IMR-90 (cell line): ENCODE measurements at regions of chr11 and their contacts with region 1.

Region 1: GRCh38 chr11:65251476-65251875 is 10.3 kb upstream of the POLA2 start:
- DNase-seq: peak; percentile 11
- ATAC-seq: no peak
- H3K4me3 ChIP-seq: no peak overlapping the region
- H3K27ac ChIP-seq: no peak overlapping the region
- H3K4me1 ChIP-seq: no peaks in the 10 kb centered on the region
- H3K27me3 ChIP-seq: peaks cover under 1% of the 10 kb centered on the region; the same call in 1 of the 2 replicates
- CTCF ChIP-seq: no peak
- POLR2A ChIP-seq: no peak
- RAD21 ChIP-seq: no peak

Region 2: DNA sequence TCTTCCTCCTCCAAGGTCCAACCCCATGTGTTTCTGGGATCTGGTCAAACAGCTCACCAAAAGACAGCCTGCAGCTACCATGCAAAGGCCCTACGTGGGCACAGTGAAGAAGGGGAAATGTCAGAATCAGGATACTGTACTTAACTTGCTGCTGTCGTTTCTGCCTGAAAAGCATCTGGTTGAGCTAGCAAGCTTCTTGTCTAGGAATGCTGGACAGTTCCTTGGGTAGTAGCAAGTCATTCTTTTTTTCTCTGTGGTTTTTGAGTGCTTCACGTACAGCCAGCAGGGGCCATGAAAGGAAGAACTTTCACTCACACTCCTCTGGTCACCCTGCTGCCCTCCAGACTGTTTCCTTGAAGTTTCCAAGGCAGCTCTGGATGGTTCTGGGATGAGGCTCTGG is 1359.2 kb before region 1 on chr11:
- CTCF ChIA-PET with region 1: no interaction called
- POLR2A ChIA-PET with region 1: no interaction called
- dilution Hi-C with region 1: no loop called
- in situ Hi-C with region 1: no loop called
- intact Hi-C with region 1: no loop called
- DNase-seq: peak; percentile 57
- ATAC-seq: peak; percentile 57
- H3K4me3 ChIP-seq: no peak overlapping the region
- H3K27ac ChIP-seq: no peak overlapping the region
- H3K4me1 ChIP-seq: peaks cover 8% of the 10 kb centered on the region
- H3K27me3 ChIP-seq: no peaks in the 10 kb centered on the region
- CTCF ChIP-seq: no peak
- POLR2A ChIP-seq: no peak
- RAD21 ChIP-seq: no peak

Region 3: DNA sequence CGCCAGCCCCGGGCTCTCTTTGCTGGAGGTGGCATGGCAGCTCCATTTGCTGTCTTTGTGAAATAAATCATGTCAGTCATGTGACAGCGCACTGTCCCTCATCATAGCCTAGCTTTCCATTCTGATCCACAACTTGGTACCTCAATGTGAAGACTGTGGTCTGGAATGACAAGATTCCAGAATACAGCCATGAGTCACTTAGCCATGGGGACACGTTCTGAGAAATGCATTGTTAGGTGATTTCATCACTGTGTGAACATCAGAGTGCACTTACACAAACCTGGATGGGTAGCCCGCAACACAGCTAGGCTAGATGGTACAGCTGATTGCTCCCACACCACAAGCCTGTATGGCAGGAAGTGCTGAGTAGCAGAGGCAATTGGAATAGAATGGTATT is 865.2 kb before region 1 on chr11:
- CTCF ChIA-PET with region 1: no interaction called
- POLR2A ChIA-PET with region 1: no interaction called
- dilution Hi-C with region 1: no loop called
- in situ Hi-C with region 1: no loop called
- intact Hi-C with region 1: no loop called
- DNase-seq: peak; percentile 35
- ATAC-seq: peak; percentile 24; the same call in 1 of the 2 replicates
- H3K4me3 ChIP-seq: no peak overlapping the region
- H3K27ac ChIP-seq: no peak overlapping the region
- H3K4me1 ChIP-seq: no peaks in the 10 kb centered on the region
- H3K27me3 ChIP-seq: peaks cover 51% of the 10 kb centered on the region
- CTCF ChIP-seq: no peak
- POLR2A ChIP-seq: no peak
- RAD21 ChIP-seq: no peak

Region 4: DNA sequence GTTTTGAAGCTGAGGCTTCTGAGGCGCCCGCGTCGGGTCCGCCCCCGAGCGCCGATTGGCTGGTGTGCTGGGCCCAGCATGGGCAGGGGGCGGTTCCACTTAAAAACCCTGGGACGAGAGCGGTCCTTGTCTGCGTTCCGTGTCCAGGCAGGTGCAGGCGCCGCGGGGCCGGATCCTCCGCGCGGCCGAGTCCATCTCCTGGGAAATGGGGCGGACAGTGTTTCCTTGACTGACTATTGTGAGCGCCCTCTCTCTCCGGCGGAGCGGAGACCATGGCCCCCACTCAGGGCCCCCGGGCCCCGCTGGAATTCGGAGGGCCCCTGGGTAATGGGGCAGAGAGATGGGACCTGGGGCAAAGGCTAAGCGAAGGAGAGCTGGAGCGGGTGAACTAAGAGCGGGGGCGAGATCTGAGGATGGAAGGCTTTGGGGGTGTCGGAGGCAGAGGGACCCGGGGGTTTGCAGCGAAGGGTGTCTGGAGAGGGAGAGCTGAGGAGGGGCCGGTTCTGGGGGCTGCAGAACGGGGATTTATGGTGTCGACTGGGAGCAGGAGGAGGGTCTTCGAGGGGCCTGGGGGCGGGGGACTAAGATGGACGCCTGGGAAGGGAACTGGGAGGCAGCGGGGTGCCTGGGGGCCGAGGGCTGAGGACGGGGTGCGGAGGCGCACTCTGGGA is 139.6 kb before region 1 on chr11 and contains the start of gene TM7SF2:
- CTCF ChIA-PET with region 1: no interaction called
- POLR2A ChIA-PET with region 1: no interaction called
- dilution Hi-C with region 1: no loop called
- in situ Hi-C with region 1: no loop called
- intact Hi-C with region 1: loop called (anchors 5 kb)
- DNase-seq: peak; percentile 86
- ATAC-seq: peak; percentile 84
- H3K4me3 ChIP-seq: peak within 1 kb of the TSS; percentile 43
- H3K27ac ChIP-seq: no peak within 1 kb of the TSS
- H3K4me1 ChIP-seq: peaks cover 20% of the 10 kb centered on the region
- H3K27me3 ChIP-seq: no peaks in the 10 kb centered on the region
- CTCF ChIP-seq: no peak
- POLR2A ChIP-seq: peak; percentile 59; the same call in 1 of the 2 replicates
- RAD21 ChIP-seq: no peak
- total RNA-seq, gene TM7SF2: 4.7 and 5.7 TPM in 2 replicates

Region 5: DNA sequence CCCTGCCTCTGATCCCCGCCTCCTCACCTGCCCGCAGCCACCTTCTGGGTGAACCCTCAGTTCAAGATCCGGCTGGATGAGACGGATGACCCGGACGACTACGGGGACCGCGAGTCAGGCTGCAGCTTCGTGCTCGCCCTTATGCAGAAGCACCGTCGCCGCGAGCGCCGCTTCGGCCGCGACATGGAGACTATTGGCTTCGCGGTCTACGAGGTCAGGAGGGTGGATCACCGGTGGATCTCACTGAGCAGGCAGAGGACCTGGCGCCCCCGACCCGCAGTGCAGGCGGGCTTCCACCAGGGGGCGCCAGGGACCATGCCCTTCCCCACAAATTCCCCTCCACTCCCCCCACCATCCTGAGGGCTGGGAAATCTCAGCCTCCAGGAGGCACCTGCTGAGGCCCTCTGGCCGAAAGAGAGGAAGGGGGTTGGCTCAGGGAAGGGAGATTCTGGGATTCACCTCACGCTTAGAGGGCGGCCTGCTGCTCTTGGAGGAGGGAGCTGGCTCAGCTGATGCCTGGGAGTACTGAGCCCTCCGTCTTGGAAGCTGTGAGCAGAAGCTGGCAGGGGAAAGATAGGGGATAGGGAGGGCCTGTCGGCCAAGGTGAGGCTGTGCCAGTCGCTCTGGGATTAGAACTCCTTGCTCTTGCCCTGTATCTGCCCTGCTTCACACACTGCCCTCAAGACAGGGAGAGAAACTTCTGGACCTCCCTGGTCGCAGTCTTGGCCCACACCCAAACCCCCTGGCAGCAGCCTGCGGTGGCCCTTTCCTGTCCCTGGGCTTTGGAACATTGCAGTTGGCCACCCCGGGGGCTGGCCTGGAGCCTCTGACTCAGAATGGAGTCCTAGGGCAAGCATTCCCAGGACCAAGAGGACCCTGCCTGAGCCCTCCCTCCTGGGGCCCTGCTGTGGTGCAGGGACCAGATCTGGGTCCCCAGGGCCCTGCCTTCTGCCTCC is 46.6 kb before region 1 on chr11:
- CTCF ChIA-PET with region 1: no interaction called
- POLR2A ChIA-PET with region 1: no interaction called
- dilution Hi-C with region 1: no loop called
- in situ Hi-C with region 1: no loop called
- intact Hi-C with region 1: loop called (anchors 1 kb)
- DNase-seq: peak; percentile 13
- ATAC-seq: peak; percentile 90
- H3K4me3 ChIP-seq: no peak overlapping the region
- H3K27ac ChIP-seq: no peak overlapping the region
- H3K4me1 ChIP-seq: no peaks in the 10 kb centered on the region
- H3K27me3 ChIP-seq: no peaks in the 10 kb centered on the region
- CTCF ChIP-seq: peak; percentile 73
- POLR2A ChIP-seq: no peak
- RAD21 ChIP-seq: peak; percentile 76

Region 6: DNA sequence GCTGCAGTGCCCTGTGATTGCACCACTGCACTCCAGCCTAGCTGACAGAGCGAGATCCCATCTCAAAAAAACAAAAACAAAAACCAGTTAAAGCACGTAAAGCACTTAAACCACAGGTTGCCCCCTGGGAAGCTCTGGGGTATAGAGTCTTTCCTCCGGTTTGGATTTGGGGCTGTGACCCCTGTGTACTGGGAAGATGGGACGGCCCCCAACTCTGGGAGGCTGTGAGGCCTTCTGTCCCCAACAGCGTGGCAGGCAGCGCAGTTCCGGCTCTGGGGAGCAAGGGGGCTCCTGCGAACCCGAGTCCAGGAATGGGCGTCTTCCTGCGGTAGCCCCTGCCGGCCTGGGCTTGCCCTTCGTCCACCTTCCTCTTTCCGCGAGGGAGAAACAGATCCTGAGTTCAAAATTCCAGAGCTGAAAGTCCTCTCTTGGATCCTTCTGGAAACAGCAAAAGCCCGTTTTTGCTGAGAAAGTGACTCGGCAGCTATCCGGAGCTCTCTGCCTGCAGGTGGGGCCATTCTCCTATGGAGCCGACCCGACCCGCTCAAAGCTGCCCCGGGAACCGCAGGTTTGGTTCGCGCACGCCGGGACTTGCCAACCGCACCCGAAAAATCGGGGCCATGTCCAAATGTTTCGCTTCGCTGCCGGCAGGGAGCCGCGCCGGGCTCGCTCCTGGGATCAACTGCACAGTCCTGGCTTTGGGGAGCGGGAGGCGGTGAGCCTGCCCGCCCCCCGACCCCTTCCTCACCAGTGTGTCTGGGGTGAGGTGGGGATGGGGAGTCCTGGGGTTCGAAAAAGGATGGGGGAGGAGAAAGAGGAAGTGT is 26.0 kb before region 1 on chr11:
- CTCF ChIA-PET with region 1: interaction called, 5 read pairs
- POLR2A ChIA-PET with region 1: no interaction called
- dilution Hi-C with region 1: no loop called
- in situ Hi-C with region 1: no loop called
- intact Hi-C with region 1: loop called (anchors 2 kb)
- DNase-seq: peak; percentile 52
- ATAC-seq: peak; percentile 79
- H3K4me3 ChIP-seq: peak overlapping the region; percentile 19; the same call in 1 of the 2 replicates
- H3K27ac ChIP-seq: peak overlapping the region; percentile 6; the same call in 1 of the 2 replicates
- H3K4me1 ChIP-seq: peaks cover 10% of the 10 kb centered on the region
- H3K27me3 ChIP-seq: no peaks in the 10 kb centered on the region
- CTCF ChIP-seq: peak; percentile 55
- POLR2A ChIP-seq: no peak
- RAD21 ChIP-seq: peak; percentile 62